Heart left ventricle (tissue), 16 donors: ENCODE measurements at regions of chr11 and their contacts with region 1.

Region 1: DNA sequence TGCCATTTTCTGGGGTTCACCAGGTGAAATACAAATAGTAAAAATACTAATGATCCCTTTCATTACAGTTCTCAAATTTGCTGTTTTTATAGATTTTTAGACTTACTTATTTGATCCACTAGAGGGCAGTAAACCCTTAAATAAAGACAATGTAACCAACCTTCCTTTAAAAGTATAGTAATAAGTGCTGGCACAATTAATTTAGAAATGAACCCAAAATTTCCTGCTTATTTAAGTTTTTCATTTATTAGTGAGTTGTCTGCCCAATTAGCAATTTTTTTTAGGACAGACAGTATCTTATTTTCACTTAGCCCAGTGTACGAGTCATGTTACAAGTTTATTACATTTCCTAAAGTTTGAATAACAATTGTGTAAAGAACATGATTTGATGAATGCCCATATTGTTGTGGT is 4.7 kb downstream of the DDIAS start:
- DNase-seq: no peak
- ATAC-seq: no peak
- H3K4me3 ChIP-seq: no peak overlapping the region
- H3K27ac ChIP-seq: peak overlapping the region in 1 of 12 donors; percentile 6
- H3K4me1 ChIP-seq: peaks cover 0 to 21% (median 3%) of the 10 kb centered on the region in 12 donors
- H3K27me3 ChIP-seq: no peaks in the 10 kb centered on the region
- CTCF ChIP-seq: peak; percentile 53 to 77 (median 72)
- POLR2A ChIP-seq: no peak

Region 2: GRCh38 chr11:82858556-82859091 is 47.6 kb before region 1 on chr11:
- intact Hi-C with region 1: no loop called
- DNase-seq: no peak
- ATAC-seq: no peak
- H3K4me3 ChIP-seq: no peak overlapping the region
- H3K27ac ChIP-seq: peak overlapping the region in 1 of 12 donors; percentile 14
- H3K4me1 ChIP-seq: peaks cover 0 to 8% (median 0%) of the 10 kb centered on the region in 12 donors
- H3K27me3 ChIP-seq: no peaks in the 10 kb centered on the region
- CTCF ChIP-seq: no peak
- POLR2A ChIP-seq: no peak

Region 3: GRCh38 chr11:83162377-83162776 is 256.1 kb after region 1 on chr11:
- intact Hi-C with region 1: loop called in 8 of 10 experiments (anchors 2 to 10 kb)
- DNase-seq: no peak
- ATAC-seq: no peak
- H3K4me3 ChIP-seq: peak overlapping the region in 2 of 12 donors; percentile 10 to 13
- H3K27ac ChIP-seq: peak overlapping the region in 2 of 12 donors; percentile 49 to 99
- H3K4me1 ChIP-seq: peaks cover 2 to 53% (median 42%) of the 10 kb centered on the region in 12 donors
- H3K27me3 ChIP-seq: no peaks in the 10 kb centered on the region
- CTCF ChIP-seq: no peak
- POLR2A ChIP-seq: no peak

Region 4: DNA sequence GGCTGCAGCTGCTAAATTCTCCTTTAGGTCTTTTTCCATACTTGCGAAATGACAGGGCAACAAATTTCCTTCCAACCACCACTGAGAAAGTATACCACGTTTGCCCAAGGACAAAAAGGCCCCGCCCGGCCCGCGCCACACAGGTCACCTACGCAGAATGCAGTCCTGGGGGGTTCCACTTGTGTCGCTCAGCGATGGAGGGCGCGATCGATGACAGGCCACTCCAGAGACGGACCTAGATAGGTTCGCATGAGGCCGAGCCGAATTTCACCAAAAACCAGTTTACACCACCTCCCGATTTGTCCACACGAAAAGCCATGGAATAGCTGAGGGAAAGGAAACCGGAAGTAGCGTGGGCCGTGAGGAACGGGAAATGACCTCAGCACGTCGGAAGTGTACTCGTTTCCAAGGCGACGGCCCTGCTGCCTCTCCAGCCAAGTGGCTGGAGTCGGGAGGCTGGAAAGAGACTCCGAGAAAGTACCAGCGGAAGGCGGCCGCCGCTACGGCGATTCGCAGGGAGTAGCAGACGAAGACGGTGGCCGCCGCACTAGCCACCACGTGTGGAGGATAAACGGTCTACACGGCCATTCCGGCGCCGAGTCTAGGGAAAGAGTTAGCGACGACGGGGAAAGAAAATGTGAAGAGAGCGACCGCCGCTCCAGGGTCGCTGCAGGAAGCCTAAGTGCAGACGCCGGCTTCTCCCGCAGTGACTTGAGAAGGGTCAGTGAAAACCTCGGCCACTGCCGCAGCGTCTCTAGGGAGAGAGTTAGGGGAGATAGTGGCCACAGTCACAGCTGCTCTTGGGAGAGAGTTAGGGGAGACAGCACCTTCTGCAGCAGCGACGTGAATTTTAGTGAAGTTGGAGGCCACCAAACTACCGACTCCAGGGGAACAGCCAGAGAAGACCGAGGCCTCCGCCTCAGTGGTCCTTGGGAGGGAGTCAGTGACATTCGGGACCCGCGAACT is 287.3 kb after region 1 on chr11 and contains the start of gene ANKRD42:
- intact Hi-C with region 1: loop called in 8 of 10 experiments (anchors 2 to 10 kb)
- DNase-seq: peak; percentile 93 to 96 (median 94)
- ATAC-seq: peak; percentile 95 to 98 (median 98)
- H3K4me3 ChIP-seq: peak within 1 kb of the TSS; percentile 49 to 97 (median 84)
- H3K27ac ChIP-seq: peak within 1 kb of the TSS; percentile 58 to 96 (median 89)
- H3K4me1 ChIP-seq: peaks cover 0 to 40% (median 24%) of the 10 kb centered on the region in 12 donors
- H3K27me3 ChIP-seq: no peaks in the 10 kb centered on the region
- CTCF ChIP-seq: no peak
- POLR2A ChIP-seq: peak in 1 of 2 donors; percentile 60
- total RNA-seq, gene ANKRD42: 3.7 to 9.1 (median 6.0) TPM

Region 5: GRCh38 chr11:83249972-83250593 is 343.8 kb after region 1 on chr11:
- intact Hi-C with region 1: loop called (anchors 2 to 5 kb)
- DNase-seq: no peak
- ATAC-seq: peak in 1 of 4 donors; percentile 56
- H3K4me3 ChIP-seq: no peak overlapping the region
- H3K27ac ChIP-seq: no peak overlapping the region
- H3K4me1 ChIP-seq: no peaks in the 10 kb centered on the region
- H3K27me3 ChIP-seq: no peaks in the 10 kb centered on the region
- CTCF ChIP-seq: peak; percentile 44 to 83 (median 65)
- POLR2A ChIP-seq: no peak